Vagina (tissue), 2 donors: ENCODE measurements at regions of chr1 and their contacts with region 1.

Region 1: DNA sequence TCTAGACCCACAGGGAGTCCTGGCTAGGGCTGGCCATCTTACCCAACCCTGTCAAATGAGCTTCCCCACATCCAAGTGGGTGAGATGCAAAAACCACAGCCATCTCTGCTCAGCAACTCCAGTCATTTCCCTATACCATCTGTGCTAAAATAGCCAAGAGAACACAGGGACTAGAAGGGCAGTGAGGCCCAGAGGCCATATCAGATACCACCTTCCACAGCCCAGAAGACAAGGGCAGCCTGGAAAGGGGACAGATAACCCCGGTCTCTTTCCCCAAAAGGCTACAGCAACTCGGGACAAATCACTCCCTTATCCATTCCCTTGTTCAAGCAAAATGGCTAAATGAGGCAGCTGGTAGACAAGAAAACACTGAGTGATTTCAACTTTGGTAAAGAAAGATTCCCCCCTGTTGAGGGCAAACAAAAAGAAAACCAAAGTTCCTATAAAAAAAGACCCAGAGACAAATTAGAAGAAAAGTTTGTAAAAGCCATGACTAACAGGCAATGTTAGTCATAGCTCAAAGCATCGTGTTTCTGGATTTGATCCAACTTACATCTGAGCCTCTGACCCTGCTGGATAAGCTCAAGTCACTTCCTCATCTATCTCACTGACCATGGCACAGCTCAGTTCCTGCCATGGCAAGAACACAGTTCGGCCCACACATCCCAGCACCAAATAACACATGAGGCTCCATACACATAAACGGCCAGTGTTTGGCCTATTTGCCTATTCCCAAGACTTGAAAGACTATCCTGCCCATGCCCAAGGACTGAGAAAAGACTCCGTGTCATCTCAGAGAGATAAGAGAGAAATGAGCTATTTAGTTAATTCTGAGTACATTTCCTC is 3.1 kb downstream of the LAMB3 start:
- DNase-seq: no peak
- H3K4me3 ChIP-seq: no peak overlapping the region
- H3K27ac ChIP-seq: peak overlapping the region; percentile 50
- H3K4me1 ChIP-seq: peaks cover 69% of the 10 kb centered on the region
- H3K27me3 ChIP-seq: no peaks in the 10 kb centered on the region
- CTCF ChIP-seq: no peak
- POLR2A ChIP-seq: no peak

Region 2: GRCh38 chr1:209704584-209704983 is 55.4 kb after region 1 on chr1 and contains the start of gene HSD11B1:
- intact Hi-C with region 1: loop called (anchors 2 kb)
- DNase-seq: peak in 1 of 2 donors; percentile 96
- H3K4me3 ChIP-seq: no peak within 1 kb of the TSS
- H3K27ac ChIP-seq: peak within 1 kb of the TSS; percentile 66
- H3K4me1 ChIP-seq: no peaks in the 10 kb centered on the region
- H3K27me3 ChIP-seq: no peaks in the 10 kb centered on the region
- CTCF ChIP-seq: no peak
- POLR2A ChIP-seq: peak in 1 of 2 donors; percentile 23
- total RNA-seq, gene HSD11B1: 18.7 TPM